Gastrocnemius medialis (tissue), 4 donors: ENCODE measurements at regions of chr4 and their contacts with region 1.

Region 1: DNA sequence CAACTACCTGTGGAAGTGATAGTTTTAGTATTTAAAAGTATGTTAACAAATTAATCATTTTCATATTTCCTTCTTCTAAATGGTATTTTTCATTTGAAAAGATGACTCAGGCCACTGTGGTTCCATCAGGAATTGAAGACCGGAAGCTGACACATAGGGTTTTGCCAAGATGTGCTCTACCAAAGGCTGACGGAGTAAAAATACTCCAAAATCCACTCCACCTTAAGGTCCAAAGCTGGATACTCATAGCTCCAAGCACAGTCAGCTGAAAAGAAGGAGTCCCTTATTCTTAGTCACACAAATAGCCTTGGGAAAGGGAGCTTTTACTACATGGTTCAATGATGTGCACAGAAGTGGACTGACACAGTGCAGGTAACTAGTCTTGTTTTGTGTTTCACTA is 472.0 kb downstream of the ARAP2 start:
- DNase-seq: no peak
- ATAC-seq: no peak
- H3K4me3 ChIP-seq: no peak overlapping the region
- H3K27ac ChIP-seq: no peak overlapping the region
- H3K4me1 ChIP-seq: no peaks in the 10 kb centered on the region
- H3K27me3 ChIP-seq: no peaks in the 10 kb centered on the region
- CTCF ChIP-seq: no peak
- POLR2A ChIP-seq: no peak

Region 2: GRCh38 chr4:35710343-35710742 is 61.9 kb before region 1 on chr4:
- in situ Hi-C with region 1: loop called in 1 of 4 experiments (anchors 10 kb)
- intact Hi-C with region 1: no loop called
- DNase-seq: no peak
- ATAC-seq: no peak
- H3K4me3 ChIP-seq: no peak overlapping the region
- H3K27ac ChIP-seq: no peak overlapping the region
- H3K4me1 ChIP-seq: no peaks in the 10 kb centered on the region
- H3K27me3 ChIP-seq: no peaks in the 10 kb centered on the region
- CTCF ChIP-seq: no peak
- POLR2A ChIP-seq: no peak